Activated CD4-positive, alpha-beta memory T cell treated with anti-CD3 and anti-CD28 coated beads for 36 hours (primary cell): ENCODE measurements at regions of chr5 and their contacts with region 1.

Region 1: GRCh38 chr5:91383027-91383955 is at the start of gene ARRDC3:
- DNase-seq: peak; percentile 98
- H3K4me3 Mint-ChIP-seq: peak within 1 kb of the TSS; percentile 86
- H3K27ac Mint-ChIP-seq: peak within 1 kb of the TSS; percentile 100
- H3K4me1 Mint-ChIP-seq: peaks cover 17% of the 10 kb centered on the region
- H3K27me3 Mint-ChIP-seq: no peaks in the 10 kb centered on the region
- total RNA-seq, gene ARRDC3: 17.9 to 19.0 TPM

Region 2: GRCh38 chr5:90529194-90529938 is 853.9 kb before region 1 on chr5 and contains the start of gene LYSMD3:
- CTCF ChIA-PET with region 1: no interaction called
- POLR2A ChIA-PET with region 1: no interaction called
- intact Hi-C with region 1: loop called (anchors 2 kb)
- DNase-seq: peak; percentile 97
- H3K4me3 Mint-ChIP-seq: peak within 1 kb of the TSS; percentile 100
- H3K27ac Mint-ChIP-seq: peak within 1 kb of the TSS; percentile 96
- H3K4me1 Mint-ChIP-seq: peaks cover 24% of the 10 kb centered on the region
- H3K27me3 Mint-ChIP-seq: peaks cover 10% of the 10 kb centered on the region
- total RNA-seq, gene LYSMD3: 12.6 to 13.0 TPM

Region 3: DNA sequence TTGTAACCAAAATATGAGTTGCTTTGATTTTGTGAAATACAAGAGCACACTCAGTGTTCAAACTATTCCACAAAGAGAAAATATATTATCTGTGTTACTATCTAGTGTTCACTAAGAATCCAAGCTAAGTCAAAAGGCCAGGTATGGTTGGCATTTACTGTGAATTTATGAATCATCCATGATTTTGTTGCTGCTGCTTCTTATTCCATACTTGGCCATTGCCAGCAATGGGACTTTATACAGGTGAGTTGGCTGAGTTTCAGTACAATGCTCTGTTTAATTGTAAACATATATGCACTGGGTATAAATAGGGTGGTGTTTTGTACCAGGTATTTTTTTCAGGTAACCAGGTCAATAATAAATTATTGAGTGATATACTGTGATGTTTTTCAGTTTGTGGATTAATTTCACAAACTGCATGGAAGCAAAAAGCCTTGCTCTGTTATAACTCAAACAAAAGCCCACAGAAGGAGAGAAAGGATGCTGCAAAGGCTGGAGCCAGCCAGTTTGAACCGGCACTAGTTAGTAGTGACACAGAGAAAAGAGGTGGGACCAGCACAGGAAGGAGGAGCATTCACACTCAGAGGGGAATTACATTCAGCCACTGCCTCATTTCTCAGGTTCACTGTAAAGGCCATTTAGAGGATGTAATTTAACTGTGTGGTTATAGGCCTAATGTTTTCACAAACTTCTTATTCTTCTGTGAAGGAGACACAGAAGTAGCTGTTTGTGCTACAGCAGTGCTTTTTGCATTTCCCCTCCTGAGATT is 442.9 kb before region 1 on chr5:
- CTCF ChIA-PET with region 1: interaction called, 3 read pairs
- POLR2A ChIA-PET with region 1: no interaction called
- intact Hi-C with region 1: loop called (anchors 1 kb)
- DNase-seq: peak; percentile 75
- H3K4me3 Mint-ChIP-seq: no peak overlapping the region
- H3K27ac Mint-ChIP-seq: peak overlapping the region; percentile 32
- H3K4me1 Mint-ChIP-seq: peaks cover 7% of the 10 kb centered on the region
- H3K27me3 Mint-ChIP-seq: no peaks in the 10 kb centered on the region

Region 4: DNA sequence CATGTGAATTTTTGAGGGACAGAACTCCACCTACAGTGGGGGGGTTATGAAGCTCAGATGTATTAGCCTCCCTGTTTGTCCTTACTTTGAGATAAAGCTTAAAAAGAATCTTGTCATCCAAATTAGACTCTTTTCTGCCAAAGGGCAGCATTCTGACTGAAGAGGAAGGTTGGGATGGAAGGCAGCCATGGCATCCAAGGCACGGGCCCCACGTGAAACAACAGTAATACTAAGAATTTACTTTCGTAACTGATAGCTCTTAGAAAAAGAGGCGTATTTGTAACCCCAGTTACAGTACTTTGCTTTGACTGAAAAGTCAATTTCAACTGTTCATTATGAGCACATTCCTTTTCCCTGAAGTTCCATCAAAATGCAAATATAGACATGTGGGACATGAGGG is 168.7 kb before region 1 on chr5:
- CTCF ChIA-PET with region 1: interaction called, 226 read pairs
- POLR2A ChIA-PET with region 1: interaction called, 6 read pairs
- intact Hi-C with region 1: loop called (anchors 1 kb)
- DNase-seq: no peak
- H3K4me3 Mint-ChIP-seq: no peak overlapping the region
- H3K27ac Mint-ChIP-seq: no peak overlapping the region
- H3K4me1 Mint-ChIP-seq: no peaks in the 10 kb centered on the region
- H3K27me3 Mint-ChIP-seq: peaks cover 2% of the 10 kb centered on the region

Region 5: GRCh38 chr5:91245871-91246270 is 137.4 kb before region 1 on chr5:
- CTCF ChIA-PET with region 1: interaction called, 20 read pairs
- POLR2A ChIA-PET with region 1: no interaction called
- intact Hi-C with region 1: no loop called
- DNase-seq: no peak
- H3K4me3 Mint-ChIP-seq: no peak overlapping the region
- H3K27ac Mint-ChIP-seq: no peak overlapping the region
- H3K4me1 Mint-ChIP-seq: no peaks in the 10 kb centered on the region
- H3K27me3 Mint-ChIP-seq: peaks cover 2% of the 10 kb centered on the region

Region 6: DNA sequence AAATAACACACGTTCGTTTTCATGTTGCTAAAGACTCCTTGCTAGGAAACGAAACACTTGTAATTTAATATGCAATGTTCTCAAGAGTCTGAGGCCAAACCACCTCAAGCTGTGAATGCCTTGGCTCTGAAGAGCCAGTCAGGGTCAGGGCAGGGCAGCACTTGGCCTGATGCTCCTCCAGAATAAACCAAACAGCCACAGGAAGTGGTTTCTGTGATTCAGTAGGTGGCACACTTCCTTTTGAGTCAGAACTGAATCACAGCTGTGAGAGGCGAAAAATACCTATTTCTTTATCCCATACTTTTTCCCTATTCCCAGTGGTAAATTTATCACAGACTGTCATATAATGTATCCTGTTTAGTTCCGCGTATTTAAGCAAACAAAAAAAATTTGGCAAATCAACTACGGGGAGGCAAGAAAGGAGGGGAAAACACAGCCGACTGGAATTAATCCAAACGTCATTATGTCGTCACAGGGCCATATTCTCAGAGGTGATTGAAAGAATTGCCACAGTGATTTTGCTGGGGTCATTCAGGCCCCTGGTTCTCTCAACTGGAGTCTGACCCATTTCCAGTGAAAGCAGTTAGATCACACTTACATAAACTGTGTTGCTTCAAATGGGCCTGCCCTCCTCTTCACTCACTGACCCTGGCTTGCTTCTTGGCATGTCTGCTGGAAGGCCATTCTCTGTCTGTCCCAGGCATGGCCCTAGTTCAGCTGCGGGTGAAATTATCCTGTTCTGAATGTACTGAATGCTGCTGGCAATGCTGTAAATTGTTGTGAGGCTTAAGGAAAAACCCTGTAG is 71.4 kb before region 1 on chr5:
- CTCF ChIA-PET with region 1: interaction called, 18 read pairs
- POLR2A ChIA-PET with region 1: interaction called, 37 read pairs
- intact Hi-C with region 1: loop called (anchors 1 kb)
- DNase-seq: peak; percentile 82
- H3K4me3 Mint-ChIP-seq: peak overlapping the region; percentile 61
- H3K27ac Mint-ChIP-seq: peak overlapping the region; percentile 95
- H3K4me1 Mint-ChIP-seq: peaks cover 45% of the 10 kb centered on the region
- H3K27me3 Mint-ChIP-seq: no peaks in the 10 kb centered on the region